Adrenal gland (tissue), 19 donors: ENCODE measurements at regions of chr10 and their contacts with region 1.

Region 1: GRCh38 chr10:43221419-43222209 is 45.3 kb downstream of the RASGEF1A start:
- DNase-seq: peak in 3 of 7 donors; percentile 7 to 10 (median 7)
- H3K4me3 ChIP-seq: no peak overlapping the region
- H3K27ac ChIP-seq: no peak overlapping the region
- H3K4me1 ChIP-seq: peaks cover 9 to 18% of the 10 kb centered on the region in 2 donors
- H3K27me3 ChIP-seq: no peaks in the 10 kb centered on the region
- CTCF ChIP-seq: no peak
- POLR2A ChIP-seq: no peak

Region 2: GRCh38 chr10:43138021-43138756 is 83.4 kb before region 1 on chr10 and contains the start of gene CSGALNACT2:
- intact Hi-C with region 1: loop called in 1 of 2 experiments (anchors 10 kb)
- DNase-seq: peak; percentile 84 to 92 (median 86)
- H3K4me3 ChIP-seq: peak within 1 kb of the TSS; percentile 64 to 85 (median 78)
- H3K27ac ChIP-seq: peak within 1 kb of the TSS; percentile 48 to 99 (median 95)
- H3K4me1 ChIP-seq: peaks cover 6 to 24% of the 10 kb centered on the region in 2 donors
- H3K27me3 ChIP-seq: no peaks in the 10 kb centered on the region
- CTCF ChIP-seq: peak in 1 of 6 experiments; percentile 3
- POLR2A ChIP-seq: peak; percentile 82 to 88
- total RNA-seq, gene CSGALNACT2: 7.4 to 19.4 (median 13.3) TPM

Region 3: GRCh38 chr10:43623351-43623750 is 401.7 kb after region 1 on chr10:
- intact Hi-C with region 1: no loop called
- DNase-seq: no peak
- H3K4me3 ChIP-seq: peak overlapping the region in 1 of 4 donors; percentile 36
- H3K27ac ChIP-seq: no peak overlapping the region
- H3K4me1 ChIP-seq: no peaks in the 10 kb centered on the region
- H3K27me3 ChIP-seq: no peaks in the 10 kb centered on the region
- CTCF ChIP-seq: no peak
- POLR2A ChIP-seq: no peak